B cell (primary cell): ENCODE measurements at regions of chr12 and their contacts with region 1.

Region 1: DNA sequence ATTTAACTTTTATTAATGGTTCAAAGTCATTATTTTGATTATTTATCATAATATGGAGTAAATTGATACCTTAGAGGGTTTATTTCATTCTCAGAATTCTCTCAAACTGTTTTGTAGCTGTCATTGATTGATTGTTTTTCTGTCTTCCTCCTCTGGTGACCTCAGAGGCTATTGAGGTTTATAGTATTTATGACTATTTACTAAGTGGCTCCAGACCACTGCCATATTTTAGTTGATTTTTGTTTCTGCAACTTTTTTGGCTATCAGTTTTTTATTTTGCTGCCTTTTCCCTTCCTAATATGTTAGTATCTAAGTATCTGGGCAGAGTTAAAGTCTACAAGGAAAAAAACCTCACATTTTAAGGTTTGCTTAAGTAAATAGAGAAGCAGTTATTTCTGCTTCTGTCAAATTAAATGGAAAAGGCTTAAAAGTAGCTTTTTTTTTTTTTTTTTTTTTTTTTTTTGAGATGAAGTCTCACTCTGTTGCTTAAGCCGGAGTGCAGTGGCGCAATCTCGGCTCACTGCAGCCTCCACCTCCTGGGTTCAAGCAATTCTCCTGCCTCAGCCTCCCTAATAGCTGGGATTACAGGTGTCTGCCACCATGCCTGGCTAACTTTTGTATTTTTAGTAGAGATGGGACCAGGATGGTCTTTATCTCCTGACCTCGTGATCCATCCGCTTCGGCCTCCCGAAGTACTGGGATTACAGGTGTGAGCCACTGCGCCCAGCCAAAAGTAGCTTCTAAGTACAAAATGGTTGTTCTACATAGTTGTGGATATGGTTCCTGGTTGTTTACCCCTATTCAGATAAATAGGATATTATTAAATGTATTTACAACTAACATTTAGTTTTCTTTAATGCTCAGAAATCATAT is 8.2 kb downstream of the MDM2 start:
- DNase-seq: no peak
- ATAC-seq: no peak
- H3K4me3 ChIP-seq: no peak overlapping the region
- H3K4me3 Mint-ChIP-seq: no peak overlapping the region
- H3K27ac ChIP-seq: no peak overlapping the region
- H3K27ac Mint-ChIP-seq: no peak overlapping the region
- H3K4me1 ChIP-seq: no peaks in the 10 kb centered on the region
- H3K4me1 Mint-ChIP-seq: peaks cover 16% of the 10 kb centered on the region
- H3K27me3 ChIP-seq: no peaks in the 10 kb centered on the region
- H3K27me3 Mint-ChIP-seq: no peaks in the 10 kb centered on the region
- CTCF ChIP-seq: no peak

Region 2: GRCh38 chr12:68792952-68793835 is 23.0 kb before region 1 on chr12:
- CTCF ChIA-PET with region 1: no interaction called
- POLR2A ChIA-PET with region 1: interaction called, 10 read pairs
- intact Hi-C with region 1: no loop called
- DNase-seq: peak; percentile 64
- ATAC-seq: peak; percentile 86
- H3K4me3 ChIP-seq: no peak overlapping the region
- H3K4me3 Mint-ChIP-seq: no peak overlapping the region
- H3K27ac ChIP-seq: no peak overlapping the region
- H3K27ac Mint-ChIP-seq: no peak overlapping the region
- H3K4me1 ChIP-seq: no peaks in the 10 kb centered on the region
- H3K4me1 Mint-ChIP-seq: peaks cover 5% of the 10 kb centered on the region
- H3K27me3 ChIP-seq: no peaks in the 10 kb centered on the region
- H3K27me3 Mint-ChIP-seq: no peaks in the 10 kb centered on the region
- CTCF ChIP-seq: no peak

Region 3: DNA sequence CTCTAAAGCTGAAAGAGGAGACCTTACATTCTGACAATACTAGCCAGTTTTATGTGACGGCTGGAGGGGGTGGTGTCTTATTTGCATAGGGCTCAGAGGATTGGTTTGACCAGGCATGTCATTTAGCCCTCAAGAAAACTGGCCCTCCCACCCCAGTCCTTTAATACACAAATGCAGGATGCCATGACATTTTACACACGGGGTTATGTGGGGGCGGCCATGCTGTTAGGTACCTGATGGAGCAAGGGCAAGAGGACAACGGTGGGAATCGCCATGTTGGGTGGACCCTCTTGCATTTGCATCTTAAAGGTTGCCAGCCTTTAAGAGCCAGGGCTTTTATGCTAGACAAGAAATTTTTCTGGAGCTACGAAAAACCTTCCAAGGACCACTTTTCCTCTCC is 15.1 kb after region 1 on chr12:
- CTCF ChIA-PET with region 1: interaction called, 18 read pairs
- POLR2A ChIA-PET with region 1: no interaction called
- intact Hi-C with region 1: no loop called
- DNase-seq: no peak
- ATAC-seq: no peak
- H3K4me3 ChIP-seq: no peak overlapping the region
- H3K4me3 Mint-ChIP-seq: no peak overlapping the region
- H3K27ac ChIP-seq: no peak overlapping the region
- H3K27ac Mint-ChIP-seq: no peak overlapping the region
- H3K4me1 ChIP-seq: no peaks in the 10 kb centered on the region
- H3K4me1 Mint-ChIP-seq: peaks cover 5% of the 10 kb centered on the region
- H3K27me3 ChIP-seq: no peaks in the 10 kb centered on the region
- H3K27me3 Mint-ChIP-seq: no peaks in the 10 kb centered on the region
- CTCF ChIP-seq: no peak

Region 4: DNA sequence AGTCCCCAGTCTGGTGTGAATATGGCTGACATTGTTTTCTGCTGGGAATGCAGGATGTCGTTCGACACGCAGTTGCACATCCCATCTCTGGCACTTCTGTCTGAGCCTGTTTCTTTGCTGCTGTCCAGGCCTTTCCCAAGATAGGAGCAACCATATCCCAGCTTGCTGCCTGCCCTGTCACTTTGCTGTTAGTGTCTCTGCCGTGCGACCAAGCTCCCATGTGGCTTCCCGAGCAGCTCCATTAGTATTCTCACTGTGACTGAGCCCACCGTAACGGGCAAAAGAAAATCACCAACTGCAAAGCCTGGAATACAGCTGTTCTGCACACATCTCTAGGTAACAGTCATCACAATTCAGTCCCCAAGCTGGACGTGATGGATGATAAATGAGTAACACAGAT is 357.2 kb after region 1 on chr12:
- CTCF ChIA-PET with region 1: no interaction called
- POLR2A ChIA-PET with region 1: no interaction called
- intact Hi-C with region 1: no loop called
- DNase-seq: no peak
- ATAC-seq: no peak
- H3K4me3 ChIP-seq: no peak overlapping the region
- H3K4me3 Mint-ChIP-seq: no peak overlapping the region
- H3K27ac ChIP-seq: no peak overlapping the region
- H3K27ac Mint-ChIP-seq: no peak overlapping the region
- H3K4me1 ChIP-seq: no peaks in the 10 kb centered on the region
- H3K4me1 Mint-ChIP-seq: no peaks in the 10 kb centered on the region
- H3K27me3 ChIP-seq: no peaks in the 10 kb centered on the region
- H3K27me3 Mint-ChIP-seq: no peaks in the 10 kb centered on the region
- CTCF ChIP-seq: no peak